ENCODE measurements at regions of chr7 and their contacts with region 1.

Region 1: GRCh38 chr7:25093268-25093826 is 31.7 kb downstream of the CYCS start:
- DNase-seq: peak; percentile 67
- H3K4me3 Mint-ChIP-seq: no peak overlapping the region
- H3K27ac Mint-ChIP-seq: no peak overlapping the region
- H3K4me1 Mint-ChIP-seq: peaks cover 18% of the 10 kb centered on the region
- H3K27me3 Mint-ChIP-seq: peaks cover 18% of the 10 kb centered on the region

Region 2: GRCh38 chr7:24227603-24228359 is 865.6 kb before region 1 on chr7:
- intact Hi-C with region 1: no loop called
- DNase-seq: no peak
- H3K4me3 Mint-ChIP-seq: no peak overlapping the region
- H3K27ac Mint-ChIP-seq: no peak overlapping the region
- H3K4me1 Mint-ChIP-seq: peaks cover 9% of the 10 kb centered on the region
- H3K27me3 Mint-ChIP-seq: no peaks in the 10 kb centered on the region

Region 3: DNA sequence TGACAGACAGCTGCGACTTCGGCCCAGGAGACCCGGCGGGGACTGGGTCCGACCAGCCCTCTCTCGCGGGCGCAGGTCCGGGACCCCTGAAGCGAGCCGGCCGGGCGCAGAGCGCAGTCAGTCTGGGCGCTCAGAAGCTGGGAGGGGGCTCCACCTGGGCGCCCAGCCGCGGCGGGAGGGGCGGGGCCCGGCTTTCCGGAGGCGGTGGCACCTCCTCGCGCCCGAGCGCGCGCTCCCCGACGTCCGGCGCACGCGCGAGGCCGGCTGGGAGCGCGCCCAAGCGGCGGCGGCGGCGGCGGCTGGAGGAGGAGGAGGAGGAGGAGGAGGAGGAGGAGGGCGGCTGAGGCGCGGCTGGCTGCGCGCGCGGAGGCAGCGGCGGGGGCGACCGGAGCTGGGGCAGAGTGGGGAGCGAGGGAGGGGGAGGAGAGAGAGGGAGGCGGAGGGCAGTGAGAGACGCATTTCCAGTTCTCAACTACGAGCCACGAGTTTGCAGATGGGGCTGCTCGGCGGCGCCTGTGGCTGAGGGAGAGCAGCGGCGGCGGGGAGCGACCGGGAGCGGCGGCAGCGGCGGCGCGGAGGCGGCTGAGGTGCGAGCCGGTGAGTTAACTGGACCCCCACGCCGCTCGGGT is 520.2 kb before region 1 on chr7 and contains the start of gene PALS2:
- intact Hi-C with region 1: loop called (anchors 5 kb)
- DNase-seq: peak; percentile 77
- H3K4me3 Mint-ChIP-seq: peak within 1 kb of the TSS; percentile 94
- H3K27ac Mint-ChIP-seq: peak within 1 kb of the TSS; percentile 84
- H3K4me1 Mint-ChIP-seq: peaks cover 29% of the 10 kb centered on the region
- H3K27me3 Mint-ChIP-seq: peaks cover 41% of the 10 kb centered on the region
- total RNA-seq, gene PALS2: 34.9 and 42.2 TPM in 2 replicates

Region 4: DNA sequence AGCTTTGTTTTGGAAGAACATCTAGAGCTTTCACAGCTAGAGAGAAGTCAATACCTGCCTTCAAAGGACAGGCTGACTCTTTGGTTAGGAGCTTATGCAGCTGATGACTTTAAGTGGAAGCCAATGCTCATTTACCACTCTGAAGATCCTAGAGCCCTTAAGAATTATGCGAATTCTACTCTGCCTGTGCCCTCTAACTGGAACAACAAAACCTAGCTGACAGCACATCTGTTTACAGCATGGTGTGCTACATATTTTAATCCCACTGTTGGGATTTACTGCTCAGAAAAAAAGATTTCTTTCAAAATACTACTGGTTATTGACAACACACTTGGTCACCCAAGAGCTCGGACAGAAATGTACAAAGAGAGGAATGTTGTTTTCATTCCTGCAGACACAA is 462.8 kb before region 1 on chr7:
- intact Hi-C with region 1: no loop called
- DNase-seq: no peak
- H3K4me3 Mint-ChIP-seq: no peak overlapping the region
- H3K27ac Mint-ChIP-seq: no peak overlapping the region
- H3K4me1 Mint-ChIP-seq: peaks cover 4% of the 10 kb centered on the region
- H3K27me3 Mint-ChIP-seq: no peaks in the 10 kb centered on the region

Region 5: GRCh38 chr7:24665564-24666294 is 427.6 kb before region 1 on chr7:
- intact Hi-C with region 1: loop called (anchors 5 kb)
- DNase-seq: peak; percentile 14
- H3K4me3 Mint-ChIP-seq: no peak overlapping the region
- H3K27ac Mint-ChIP-seq: no peak overlapping the region
- H3K4me1 Mint-ChIP-seq: no peaks in the 10 kb centered on the region
- H3K27me3 Mint-ChIP-seq: no peaks in the 10 kb centered on the region

Region 6: GRCh38 chr7:24812310-24812945 is 280.9 kb before region 1 on chr7:
- intact Hi-C with region 1: loop called (anchors 1 kb)
- DNase-seq: peak; percentile 30
- H3K4me3 Mint-ChIP-seq: no peak overlapping the region
- H3K27ac Mint-ChIP-seq: no peak overlapping the region
- H3K4me1 Mint-ChIP-seq: peaks cover 2% of the 10 kb centered on the region
- H3K27me3 Mint-ChIP-seq: no peaks in the 10 kb centered on the region

Region 7: GRCh38 chr7:25028370-25029021 is 64.9 kb before region 1 on chr7:
- intact Hi-C with region 1: loop called (anchors 2 kb)
- DNase-seq: peak; percentile 13
- H3K4me3 Mint-ChIP-seq: peak overlapping the region; percentile 12
- H3K27ac Mint-ChIP-seq: peak overlapping the region; percentile 93
- H3K4me1 Mint-ChIP-seq: peaks cover 40% of the 10 kb centered on the region
- H3K27me3 Mint-ChIP-seq: peaks cover 12% of the 10 kb centered on the region

Region 8: GRCh38 chr7:25069900-25070443 is 23.4 kb before region 1 on chr7:
- intact Hi-C with region 1: loop called (anchors 1 kb)
- DNase-seq: peak; percentile 16
- H3K4me3 Mint-ChIP-seq: no peak overlapping the region
- H3K27ac Mint-ChIP-seq: no peak overlapping the region
- H3K4me1 Mint-ChIP-seq: peaks cover 27% of the 10 kb centered on the region
- H3K27me3 Mint-ChIP-seq: peaks cover 2% of the 10 kb centered on the region

Region 9: GRCh38 chr7:25427721-25428120 is 334.4 kb after region 1 on chr7:
- intact Hi-C with region 1: no loop called
- DNase-seq: no peak
- H3K4me3 Mint-ChIP-seq: no peak overlapping the region
- H3K27ac Mint-ChIP-seq: no peak overlapping the region
- H3K4me1 Mint-ChIP-seq: no peaks in the 10 kb centered on the region
- H3K27me3 Mint-ChIP-seq: peaks cover 10% of the 10 kb centered on the region

Region 10: GRCh38 chr7:25444991-25445390 is 351.6 kb after region 1 on chr7:
- intact Hi-C with region 1: no loop called
- DNase-seq: no peak
- H3K4me3 Mint-ChIP-seq: no peak overlapping the region
- H3K27ac Mint-ChIP-seq: no peak overlapping the region
- H3K4me1 Mint-ChIP-seq: no peaks in the 10 kb centered on the region
- H3K27me3 Mint-ChIP-seq: peaks cover 2% of the 10 kb centered on the region